ENCODE measurements at regions of chr12 and their contacts with region 1.

Region 1: GRCh38 chr12:93397412-93397811 is 19.7 kb downstream of the NUDT4 start:
- DNase-seq: no peak
- H3K4me3 Mint-ChIP-seq: no peak overlapping the region
- H3K27ac Mint-ChIP-seq: no peak overlapping the region
- H3K4me1 Mint-ChIP-seq: peaks cover 3% of the 10 kb centered on the region
- H3K27me3 Mint-ChIP-seq: no peaks in the 10 kb centered on the region

Region 2: DNA sequence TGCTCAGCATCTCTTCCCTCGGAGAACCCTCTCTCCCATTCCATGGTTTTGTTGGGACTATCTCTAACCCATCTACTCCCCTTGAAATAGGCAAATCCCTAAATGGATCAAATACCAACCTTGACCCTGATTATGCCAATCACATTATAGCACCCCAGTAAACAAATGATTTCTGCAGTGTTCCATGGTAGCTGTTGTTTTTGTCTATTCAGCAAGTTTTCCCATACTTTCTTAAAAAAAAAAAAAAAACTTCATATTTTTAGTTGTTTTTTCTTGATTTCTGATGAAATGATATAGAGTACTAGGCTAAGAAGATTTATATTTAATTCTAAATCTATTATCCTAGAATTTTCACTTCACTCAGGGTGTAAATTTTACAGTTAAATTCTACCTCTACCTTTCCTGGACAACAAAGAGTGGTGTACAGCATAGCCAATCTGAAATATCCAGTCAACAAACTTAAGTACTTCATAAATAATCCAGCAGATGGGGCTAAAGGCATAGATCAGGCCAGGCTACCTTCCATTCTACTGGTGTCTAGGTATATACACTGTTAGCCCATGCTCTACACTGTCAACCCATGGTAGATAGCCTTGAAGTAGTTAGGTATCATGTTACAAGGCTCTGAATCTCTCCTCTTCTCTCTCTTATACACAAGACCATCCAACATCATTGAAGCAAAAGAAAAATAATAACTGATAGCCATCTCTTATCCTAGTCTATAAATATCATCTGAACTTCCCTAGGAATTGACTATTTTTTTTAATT is 612.4 kb before region 1 on chr12:
- CTCF ChIA-PET with region 1: interaction called, 4 read pairs
- intact Hi-C with region 1: loop called (anchors 2 kb)
- DNase-seq: peak; percentile 35
- H3K4me3 Mint-ChIP-seq: no peak overlapping the region
- H3K27ac Mint-ChIP-seq: no peak overlapping the region
- H3K4me1 Mint-ChIP-seq: peaks cover 2% of the 10 kb centered on the region
- H3K27me3 Mint-ChIP-seq: no peaks in the 10 kb centered on the region

Region 3: DNA sequence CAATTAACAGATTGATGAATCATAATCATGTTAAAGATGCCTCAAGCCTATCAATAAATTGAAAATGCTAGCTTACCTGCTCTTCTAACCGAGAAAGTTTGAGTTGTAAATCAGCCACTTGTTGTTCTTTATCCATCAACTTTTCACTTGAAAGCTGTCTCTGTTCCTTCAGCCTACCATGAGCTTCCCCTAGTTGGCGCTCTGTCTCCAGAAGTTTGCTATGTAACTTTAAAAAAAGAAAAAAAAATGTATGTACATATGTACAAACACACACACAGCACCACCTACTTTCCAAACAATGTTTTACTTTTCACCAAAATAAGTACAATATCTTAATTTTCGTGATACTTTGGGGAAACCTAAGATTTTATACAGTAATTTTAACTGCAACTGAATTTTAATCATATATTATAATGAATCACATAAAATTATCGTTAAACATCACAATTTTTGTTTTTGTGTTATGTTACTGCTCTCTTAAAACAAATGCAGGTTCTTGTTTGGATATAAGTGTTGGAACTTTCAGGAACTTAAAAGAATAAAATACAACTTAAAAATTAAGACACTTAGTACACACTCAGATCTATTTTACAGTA is 569.5 kb before region 1 on chr12:
- CTCF ChIA-PET with region 1: no interaction called
- intact Hi-C with region 1: loop called (anchors 5 kb)
- DNase-seq: peak; percentile 56
- H3K4me3 Mint-ChIP-seq: no peak overlapping the region
- H3K27ac Mint-ChIP-seq: no peak overlapping the region
- H3K4me1 Mint-ChIP-seq: peaks cover 2% of the 10 kb centered on the region
- H3K27me3 Mint-ChIP-seq: no peaks in the 10 kb centered on the region

Region 4: DNA sequence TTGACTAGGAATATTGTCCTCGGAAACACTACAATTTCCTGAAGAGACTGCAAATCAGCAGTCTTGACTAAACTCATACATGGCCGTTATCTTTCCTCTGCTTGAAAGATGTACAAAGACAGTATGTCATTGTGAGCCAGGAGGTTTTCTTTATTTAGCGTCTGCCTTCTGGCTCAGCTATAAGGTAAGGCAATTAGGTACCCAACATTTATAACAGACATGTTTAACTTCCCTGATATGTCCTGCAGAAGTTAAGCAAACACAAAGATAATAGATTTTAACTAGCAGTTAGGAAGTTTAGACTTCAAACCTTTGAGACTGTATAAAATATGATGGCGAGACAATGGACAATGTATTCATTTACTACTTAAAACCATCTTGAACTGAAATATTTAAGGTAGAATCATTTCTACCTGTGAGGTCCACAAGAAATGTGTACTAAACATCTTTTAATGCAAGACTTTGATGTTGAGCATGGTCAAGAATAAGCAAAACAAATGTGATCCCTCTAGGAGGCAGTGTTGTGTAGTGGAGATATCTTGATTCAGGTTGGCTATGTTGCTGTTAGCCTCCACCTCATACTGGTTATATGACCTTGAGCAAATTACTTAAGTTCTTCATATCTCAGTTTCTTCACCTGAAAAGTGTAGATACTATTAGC is 372.1 kb before region 1 on chr12:
- CTCF ChIA-PET with region 1: no interaction called
- intact Hi-C with region 1: loop called (anchors 1 kb)
- DNase-seq: no peak
- H3K4me3 Mint-ChIP-seq: no peak overlapping the region
- H3K27ac Mint-ChIP-seq: no peak overlapping the region
- H3K4me1 Mint-ChIP-seq: no peaks in the 10 kb centered on the region
- H3K27me3 Mint-ChIP-seq: peaks cover 3% of the 10 kb centered on the region

Region 5: GRCh38 chr12:93336291-93336741 is 61.1 kb before region 1 on chr12:
- CTCF ChIA-PET with region 1: no interaction called
- intact Hi-C with region 1: no loop called
- DNase-seq: no peak
- H3K4me3 Mint-ChIP-seq: no peak overlapping the region
- H3K27ac Mint-ChIP-seq: no peak overlapping the region
- H3K4me1 Mint-ChIP-seq: no peaks in the 10 kb centered on the region
- H3K27me3 Mint-ChIP-seq: no peaks in the 10 kb centered on the region

Measured in activated naive CD4-positive, alpha-beta T cell treated with anti-CD3 and anti-CD28 coated beads for 36 hours (primary cell).